Upper lobe of right lung (tissue), 1 donor: ENCODE measurements at regions of chr11 and their contacts with region 1.

Region 1: GRCh38 chr11:11036848-11037732 is 179.2 kb upstream of the ZBED5 start:
- DNase-seq: no peak
- ATAC-seq: peak; percentile 86
- H3K4me3 ChIP-seq: no peak overlapping the region
- H3K27ac ChIP-seq: no peak overlapping the region
- H3K4me1 ChIP-seq: peaks cover 4% of the 10 kb centered on the region
- H3K27me3 ChIP-seq: no peaks in the 10 kb centered on the region
- CTCF ChIP-seq: peak; percentile 74

Region 2: DNA sequence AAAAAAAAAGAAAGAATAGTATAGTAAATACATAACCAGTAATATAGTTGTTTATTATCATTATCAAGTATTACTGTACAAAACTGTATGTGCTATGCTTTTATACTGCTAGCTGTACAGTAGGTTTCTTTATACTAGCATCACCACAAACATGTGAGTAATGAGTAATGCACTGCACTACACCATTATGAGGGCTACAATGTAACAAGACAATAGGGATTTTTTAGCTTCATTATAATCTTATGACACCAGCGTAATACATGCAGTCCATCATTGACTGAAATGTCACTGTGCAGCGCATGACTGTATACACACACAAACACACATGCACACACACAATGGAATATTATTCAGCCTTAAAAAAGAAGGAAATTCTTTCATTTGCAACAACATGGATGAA is 67.7 kb before region 1 on chr11:
- intact Hi-C with region 1: no loop called
- DNase-seq: no peak
- ATAC-seq: no peak
- H3K4me3 ChIP-seq: no peak overlapping the region
- H3K27ac ChIP-seq: no peak overlapping the region
- H3K4me1 ChIP-seq: no peaks in the 10 kb centered on the region
- H3K27me3 ChIP-seq: no peaks in the 10 kb centered on the region
- CTCF ChIP-seq: no peak

Region 3: DNA sequence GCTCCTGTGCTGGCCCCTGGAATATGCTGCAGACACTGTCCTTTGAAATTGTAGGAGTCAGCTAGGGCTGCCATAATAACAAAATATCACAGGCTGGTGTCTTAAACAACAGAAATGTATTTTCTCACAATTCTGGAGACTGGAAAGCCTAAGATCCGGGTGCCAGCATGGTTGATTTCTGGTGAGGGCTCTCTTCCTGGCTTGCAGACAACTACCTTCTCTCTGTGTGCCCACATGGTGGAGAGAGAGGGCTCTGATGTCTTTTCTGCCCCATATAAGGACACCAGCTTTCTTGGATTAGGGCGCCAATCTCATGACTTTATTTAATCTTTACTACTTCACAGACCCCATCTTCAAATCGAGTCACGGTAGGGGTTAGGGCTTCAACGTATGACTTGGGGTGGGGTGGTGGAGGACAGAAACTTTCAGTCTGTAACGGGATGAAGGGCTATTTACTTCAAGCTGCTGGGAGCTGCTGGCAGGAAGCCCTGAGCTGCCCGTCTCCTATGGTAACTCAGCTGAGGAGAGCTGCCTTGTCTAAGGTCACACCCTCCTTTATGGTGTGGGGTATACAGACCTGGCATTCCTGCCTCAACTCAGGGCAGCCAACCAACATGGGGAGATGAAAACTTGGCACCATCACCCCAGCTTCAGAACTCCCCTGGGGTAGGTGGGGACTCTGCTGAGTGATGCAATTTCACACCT is 36.4 kb before region 1 on chr11:
- intact Hi-C with region 1: no loop called
- DNase-seq: no peak
- ATAC-seq: no peak
- H3K4me3 ChIP-seq: no peak overlapping the region
- H3K27ac ChIP-seq: no peak overlapping the region
- H3K4me1 ChIP-seq: no peaks in the 10 kb centered on the region
- H3K27me3 ChIP-seq: peaks cover 15% of the 10 kb centered on the region
- CTCF ChIP-seq: no peak

Region 4: GRCh38 chr11:11444027-11444803 is 407.1 kb after region 1 on chr11:
- intact Hi-C with region 1: no loop called
- DNase-seq: no peak
- ATAC-seq: peak; percentile 33
- H3K4me3 ChIP-seq: no peak overlapping the region
- H3K27ac ChIP-seq: no peak overlapping the region
- H3K4me1 ChIP-seq: peaks cover 13% of the 10 kb centered on the region
- H3K27me3 ChIP-seq: no peaks in the 10 kb centered on the region
- CTCF ChIP-seq: no peak

Region 5: GRCh38 chr11:11787305-11788062 is 750.4 kb after region 1 on chr11:
- intact Hi-C with region 1: loop called (anchors 5 kb)
- DNase-seq: peak; percentile 74
- ATAC-seq: peak; percentile 96
- H3K4me3 ChIP-seq: no peak overlapping the region
- H3K27ac ChIP-seq: no peak overlapping the region
- H3K4me1 ChIP-seq: no peaks in the 10 kb centered on the region
- H3K27me3 ChIP-seq: no peaks in the 10 kb centered on the region
- CTCF ChIP-seq: peak; percentile 89